H1 (cell line): ENCODE measurements at regions of chr17 and their contacts with region 1.

Region 1: GRCh38 chr17:80117491-80118401 is 16.4 kb downstream of the GAA start:
- DNase-seq: peak in 1 of 2 experiments; percentile 44
- H3K4me3 ChIP-seq: no peak overlapping the region
- H3K27ac ChIP-seq: no peak overlapping the region
- H3K4me1 ChIP-seq: peaks cover 0 to 8% (median 6%) of the 10 kb centered on the region in 4 experiments; a peak in 4 of 7 replicates
- H3K27me3 ChIP-seq: no peaks in the 10 kb centered on the region
- CTCF ChIP-seq: no peak
- EP300 ChIP-seq: no peak
- POLR2A ChIP-seq: no peak
- RAD21 ChIP-seq: no peak

Region 2: GRCh38 chr17:79658811-79659207 is 458.9 kb before region 1 on chr17:
- CTCF ChIA-PET with region 1: no interaction called
- POLR2A ChIA-PET with region 1: no interaction called
- DNase-seq: peak in 1 of 2 experiments; percentile 64
- H3K4me3 ChIP-seq: no peak overlapping the region
- H3K27ac ChIP-seq: no peak overlapping the region
- H3K4me1 ChIP-seq: peaks cover 0 to 6% (median 4%) of the 10 kb centered on the region in 4 experiments; a peak in 5 of 7 replicates
- H3K27me3 ChIP-seq: no peaks in the 10 kb centered on the region; a peak in 1 of 7 replicates
- CTCF ChIP-seq: peak; percentile 57 to 87 (median 86)
- EP300 ChIP-seq: no peak
- POLR2A ChIP-seq: no peak
- RAD21 ChIP-seq: peak; percentile 56 to 66

Region 3: GRCh38 chr17:80101011-80101945 is 16.5 kb before region 1 on chr17 and contains the start of gene GAA:
- CTCF ChIA-PET with region 1: interaction called, 8 read pairs
- POLR2A ChIA-PET with region 1: interaction called, 20 read pairs
- DNase-seq: peak; percentile 44 to 96
- H3K4me3 ChIP-seq: peak within 1 kb of the TSS; percentile 67 to 87 (median 86)
- H3K27ac ChIP-seq: peak within 1 kb of the TSS; percentile 20; the same call in 1 of the 2 replicates
- H3K4me1 ChIP-seq: peaks cover 0 to 7% (median 1%) of the 10 kb centered on the region in 4 experiments; a peak in 4 of 7 replicates
- H3K27me3 ChIP-seq: peaks cover 0 to 9% (median 5%) of the 10 kb centered on the region in 4 experiments; a peak in 3 of 7 replicates
- CTCF ChIP-seq: peak; percentile 71 to 91 (median 81)
- EP300 ChIP-seq: no peak
- POLR2A ChIP-seq: peak in 1 of 2 experiments; percentile 76; a peak in 2 of 3 replicates
- RAD21 ChIP-seq: peak; percentile 20 to 53; a peak in 2 of 4 replicates
- total RNA-seq, gene GAA: 25.3 and 30.0 TPM in 2 replicates